Naive thymus-derived CD4-positive, alpha-beta T cell (primary cell): ENCODE measurements at regions of chr11 and their contacts with region 1.

Region 1: GRCh38 chr11:126211235-126212088 is at the starts of genes FAM118B and RPUSD4:
- DNase-seq: peak; percentile 96 to 99 (median 98)
- ATAC-seq: peak; percentile 99
- H3K4me3 ChIP-seq: peak within 1 kb of the TSS; percentile 100
- H3K4me3 Mint-ChIP-seq: peak within 1 kb of the TSS; percentile 93 to 100 (median 98)
- H3K27ac ChIP-seq: peak within 1 kb of the TSS; percentile 84
- H3K27ac Mint-ChIP-seq: peak within 1 kb of the TSS; percentile 90 to 99 (median 96)
- H3K4me1 ChIP-seq: peaks cover 12 to 15% of the 10 kb centered on the region in 2 donors
- H3K4me1 Mint-ChIP-seq: peaks cover 28 to 57% (median 38%) of the 10 kb centered on the region in 7 donors
- H3K27me3 ChIP-seq: no peaks in the 10 kb centered on the region
- H3K27me3 Mint-ChIP-seq: peaks cover 0 to 6% (median 0%) of the 10 kb centered on the region in 5 donors
- total RNA-seq, gene FAM118B: 4.0 to 10.9 (median 10.5) TPM
- total RNA-seq, gene RPUSD4: 30.1 to 49.6 (median 43.8) TPM

Region 2: GRCh38 chr11:124622531-124623451 is 1588.7 kb before region 1 on chr11 and contains the start of gene TBRG1:
- CTCF ChIA-PET with region 1: no interaction called
- POLR2A ChIA-PET with region 1: no interaction called
- intact Hi-C with region 1: loop called (anchors 2 to 10 kb)
- DNase-seq: peak; percentile 58 to 87 (median 81)
- ATAC-seq: peak; percentile 96
- H3K4me3 ChIP-seq: peak within 1 kb of the TSS; percentile 75
- H3K4me3 Mint-ChIP-seq: peak within 1 kb of the TSS; percentile 89 to 100 (median 98)
- H3K27ac ChIP-seq: peak within 1 kb of the TSS; percentile 91
- H3K27ac Mint-ChIP-seq: peak within 1 kb of the TSS; percentile 91 to 100 (median 98)
- H3K4me1 ChIP-seq: peaks cover 7 to 12% of the 10 kb centered on the region in 2 donors
- H3K4me1 Mint-ChIP-seq: peaks cover 21 to 52% (median 46%) of the 10 kb centered on the region in 7 donors
- H3K27me3 ChIP-seq: no peaks in the 10 kb centered on the region
- H3K27me3 Mint-ChIP-seq: peaks cover 0 to 23% (median 7%) of the 10 kb centered on the region in 5 donors
- total RNA-seq, gene TBRG1: 35.5 to 78.6 (median 63.9) TPM

Region 3: GRCh38 chr11:125568970-125569914 is 642.2 kb before region 1 on chr11 and contains the start of gene EI24:
- CTCF ChIA-PET with region 1: no interaction called
- POLR2A ChIA-PET with region 1: no interaction called
- intact Hi-C with region 1: loop called (anchors 1 to 5 kb)
- DNase-seq: peak; percentile 73 to 89 (median 81)
- ATAC-seq: peak; percentile 99
- H3K4me3 ChIP-seq: peak within 1 kb of the TSS; percentile 90
- H3K4me3 Mint-ChIP-seq: peak within 1 kb of the TSS; percentile 90 to 97 (median 94)
- H3K27ac ChIP-seq: peak within 1 kb of the TSS; percentile 90
- H3K27ac Mint-ChIP-seq: peak within 1 kb of the TSS; percentile 78 to 96 (median 91)
- H3K4me1 ChIP-seq: peaks cover 13 to 16% of the 10 kb centered on the region in 2 donors
- H3K4me1 Mint-ChIP-seq: peaks cover 12 to 38% (median 26%) of the 10 kb centered on the region in 7 donors
- H3K27me3 ChIP-seq: no peaks in the 10 kb centered on the region
- H3K27me3 Mint-ChIP-seq: no peaks in the 10 kb centered on the region
- total RNA-seq, gene EI24: 21.3 to 42.7 (median 35.7) TPM

Region 4: DNA sequence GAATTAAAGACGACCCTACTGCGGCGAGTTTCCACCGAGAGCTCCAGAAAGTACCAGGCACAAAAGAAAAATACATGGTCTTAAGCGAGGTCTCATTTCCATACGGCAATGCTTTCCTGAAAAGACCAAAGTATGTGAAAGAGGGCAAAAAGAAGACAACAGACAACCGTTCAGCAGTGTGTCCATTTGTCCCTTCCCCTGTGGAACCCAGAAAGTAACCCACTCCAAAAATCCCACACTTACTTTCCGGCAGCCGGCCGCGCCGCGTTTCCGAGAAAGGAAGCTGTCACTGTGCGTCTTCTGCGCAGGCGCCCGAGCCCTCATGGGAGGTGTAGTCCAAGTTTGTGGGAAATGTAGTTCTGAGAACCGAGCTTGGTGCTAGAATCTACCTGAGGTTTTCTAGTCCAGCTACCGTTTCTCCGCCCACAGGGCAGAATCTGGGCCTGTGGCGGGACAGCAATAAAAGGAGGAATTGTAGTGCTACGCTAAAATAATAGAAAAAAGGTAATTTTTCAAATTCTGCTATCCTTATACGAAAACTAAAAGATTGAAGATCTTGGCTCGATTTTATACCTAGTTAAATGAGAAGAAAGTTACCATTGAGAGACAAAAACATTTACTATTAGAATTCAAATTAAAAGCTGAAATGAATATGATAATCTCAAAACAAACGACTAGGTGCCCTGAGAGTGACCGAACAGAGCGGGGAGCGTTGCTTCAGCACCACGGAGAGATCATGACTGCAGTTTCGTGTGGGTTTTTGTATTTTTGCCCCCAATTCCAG is 308.3 kb before region 1 on chr11 and contains the start of gene PUS3:
- CTCF ChIA-PET with region 1: no interaction called
- POLR2A ChIA-PET with region 1: interaction called, 3 read pairs
- intact Hi-C with region 1: loop called (anchors 1 kb)
- DNase-seq: peak; percentile 73 to 88 (median 83)
- ATAC-seq: peak; percentile 96
- H3K4me3 ChIP-seq: peak within 1 kb of the TSS; percentile 91
- H3K4me3 Mint-ChIP-seq: peak within 1 kb of the TSS; percentile 82 to 98 (median 96)
- H3K27ac ChIP-seq: peak within 1 kb of the TSS; percentile 86
- H3K27ac Mint-ChIP-seq: peak within 1 kb of the TSS; percentile 83 to 96 (median 92)
- H3K4me1 ChIP-seq: peaks cover 7 to 13% of the 10 kb centered on the region in 2 donors
- H3K4me1 Mint-ChIP-seq: peaks cover 21 to 54% (median 39%) of the 10 kb centered on the region in 7 donors
- H3K27me3 ChIP-seq: peaks cover 0 to 4% of the 10 kb centered on the region in 2 donors
- H3K27me3 Mint-ChIP-seq: peaks cover 18 to 40% (median 29%) of the 10 kb centered on the region in 5 donors
- total RNA-seq, gene PUS3: 4.6 to 15.3 (median 9.3) TPM

Region 5: GRCh38 chr11:125952973-125953372 is 258.5 kb before region 1 on chr11:
- CTCF ChIA-PET with region 1: no interaction called
- POLR2A ChIA-PET with region 1: no interaction called
- intact Hi-C with region 1: no loop called
- DNase-seq: no peak
- ATAC-seq: no peak
- H3K4me3 ChIP-seq: no peak overlapping the region
- H3K4me3 Mint-ChIP-seq: no peak overlapping the region
- H3K27ac ChIP-seq: no peak overlapping the region
- H3K27ac Mint-ChIP-seq: no peak overlapping the region
- H3K4me1 ChIP-seq: no peaks in the 10 kb centered on the region
- H3K4me1 Mint-ChIP-seq: peaks cover 3 to 7% (median 5%) of the 10 kb centered on the region in 7 donors
- H3K27me3 ChIP-seq: no peaks in the 10 kb centered on the region
- H3K27me3 Mint-ChIP-seq: peaks cover 0 to 6% (median 4%) of the 10 kb centered on the region in 5 donors

Region 6: GRCh38 chr11:126153972-126154371 is 57.5 kb before region 1 on chr11:
- CTCF ChIA-PET with region 1: no interaction called
- POLR2A ChIA-PET with region 1: no interaction called
- intact Hi-C with region 1: no loop called
- DNase-seq: no peak
- ATAC-seq: no peak
- H3K4me3 ChIP-seq: no peak overlapping the region
- H3K4me3 Mint-ChIP-seq: no peak overlapping the region
- H3K27ac ChIP-seq: no peak overlapping the region
- H3K27ac Mint-ChIP-seq: no peak overlapping the region
- H3K4me1 ChIP-seq: no peaks in the 10 kb centered on the region
- H3K4me1 Mint-ChIP-seq: peaks cover 0 to 2% (median 0%) of the 10 kb centered on the region in 7 donors
- H3K27me3 ChIP-seq: no peaks in the 10 kb centered on the region
- H3K27me3 Mint-ChIP-seq: peaks cover 4 to 11% (median 8%) of the 10 kb centered on the region in 5 donors

Region 7: GRCh38 chr11:126268708-126269579 is 57.5 kb after region 1 on chr11 and contains the starts of genes FOXRED1 and SRPRA:
- CTCF ChIA-PET with region 1: no interaction called
- POLR2A ChIA-PET with region 1: interaction called, 11 read pairs
- intact Hi-C with region 1: loop called (anchors 1 kb)
- DNase-seq: peak; percentile 98 to 100 (median 100)
- ATAC-seq: peak; percentile 100
- H3K4me3 ChIP-seq: peak within 1 kb of the TSS; percentile 99
- H3K4me3 Mint-ChIP-seq: peak within 1 kb of the TSS; percentile 91 to 98 (median 97)
- H3K27ac ChIP-seq: peak within 1 kb of the TSS; percentile 94
- H3K27ac Mint-ChIP-seq: peak within 1 kb of the TSS; percentile 94 to 99 (median 98)
- H3K4me1 ChIP-seq: peaks cover 22 to 23% of the 10 kb centered on the region in 2 donors
- H3K4me1 Mint-ChIP-seq: peaks cover 26 to 60% (median 47%) of the 10 kb centered on the region in 7 donors
- H3K27me3 ChIP-seq: no peaks in the 10 kb centered on the region
- H3K27me3 Mint-ChIP-seq: no peaks in the 10 kb centered on the region
- total RNA-seq, gene FOXRED1: 27.5 to 42.7 (median 35.5) TPM
- total RNA-seq, gene SRPRA: 141 to 179 (median 150) TPM

Region 8: GRCh38 chr11:126355324-126355925 is 144.0 kb after region 1 on chr11 and contains the start of gene ST3GAL4:
- CTCF ChIA-PET with region 1: no interaction called
- POLR2A ChIA-PET with region 1: no interaction called
- intact Hi-C with region 1: loop called (anchors 1 kb)
- DNase-seq: peak; percentile 8 to 83 (median 36)
- ATAC-seq: peak; percentile 77
- H3K4me3 ChIP-seq: peak within 1 kb of the TSS; percentile 74
- H3K4me3 Mint-ChIP-seq: peak within 1 kb of the TSS; percentile 77 to 95 (median 88)
- H3K27ac ChIP-seq: peak within 1 kb of the TSS; percentile 51
- H3K27ac Mint-ChIP-seq: peak within 1 kb of the TSS in 8 of 9 donors; percentile 19 to 91 (median 62)
- H3K4me1 ChIP-seq: peaks cover 8 to 14% of the 10 kb centered on the region in 2 donors
- H3K4me1 Mint-ChIP-seq: peaks cover 21 to 46% (median 29%) of the 10 kb centered on the region in 7 donors
- H3K27me3 ChIP-seq: no peaks in the 10 kb centered on the region
- H3K27me3 Mint-ChIP-seq: no peaks in the 10 kb centered on the region
- total RNA-seq, gene ST3GAL4: 2.7 to 13.4 (median 4.7) TPM

Region 9: DNA sequence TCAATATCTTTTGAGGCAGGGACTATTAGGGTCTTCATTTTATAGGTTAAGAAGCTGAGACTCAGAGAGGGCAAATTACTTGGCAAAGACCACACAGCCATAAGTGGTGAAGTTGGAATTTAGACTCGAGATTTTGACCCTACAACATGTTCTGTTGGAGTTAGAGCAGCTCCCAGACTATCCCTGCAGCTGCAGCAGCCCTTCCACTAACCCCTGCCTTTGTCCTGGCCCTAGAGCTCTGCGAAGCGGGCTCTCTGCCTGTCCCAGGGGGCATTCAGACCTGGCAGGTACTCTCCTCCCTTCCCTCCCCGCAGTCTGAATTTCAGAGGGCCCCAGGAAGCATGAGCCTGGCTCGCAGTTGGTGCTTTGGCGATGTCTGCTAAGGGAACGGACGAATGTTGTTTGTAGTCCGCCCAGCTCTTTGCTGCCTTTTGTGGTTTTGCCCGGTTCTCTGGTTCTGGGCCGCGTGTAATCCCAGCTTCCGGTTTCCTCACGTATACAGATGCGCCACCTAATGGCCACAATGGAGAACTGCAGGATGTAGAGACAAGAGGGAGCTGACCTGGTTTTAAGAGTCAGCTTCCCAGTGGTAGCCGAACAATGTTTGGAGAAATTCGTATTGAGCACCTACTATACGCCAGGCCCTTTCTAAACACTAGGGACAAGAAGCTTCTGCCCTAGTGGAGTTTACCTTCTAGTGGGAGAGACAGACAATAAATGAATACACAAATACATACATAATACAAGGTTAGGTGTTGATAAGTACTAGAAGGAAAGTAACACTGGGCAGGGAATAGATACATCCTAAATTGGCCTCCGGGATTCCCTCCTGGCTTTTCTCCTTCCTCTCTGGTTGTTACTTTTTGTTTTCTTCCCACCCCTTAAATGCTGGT is 269.2 kb after region 1 on chr11:
- CTCF ChIA-PET with region 1: no interaction called
- POLR2A ChIA-PET with region 1: no interaction called
- intact Hi-C with region 1: no loop called
- DNase-seq: peak; percentile 45 to 76 (median 65)
- ATAC-seq: peak; percentile 93
- H3K4me3 ChIP-seq: peak overlapping the region; percentile 31
- H3K4me3 Mint-ChIP-seq: peak overlapping the region; percentile 22 to 79 (median 68)
- H3K27ac ChIP-seq: no peak overlapping the region
- H3K27ac Mint-ChIP-seq: peak overlapping the region; percentile 35 to 88 (median 70)
- H3K4me1 ChIP-seq: peaks cover 0 to 13% of the 10 kb centered on the region in 2 donors
- H3K4me1 Mint-ChIP-seq: peaks cover 12 to 29% (median 19%) of the 10 kb centered on the region in 7 donors
- H3K27me3 ChIP-seq: no peaks in the 10 kb centered on the region
- H3K27me3 Mint-ChIP-seq: peaks cover 0 to 6% (median 0%) of the 10 kb centered on the region in 5 donors